ENCODE measurements at regions of chr5 and their contacts with region 1.

Region 1: GRCh38 chr5:134113902-134114875 is at the start of gene TCF7:
- DNase-seq: peak; percentile 69 to 87 (median 83)
- ATAC-seq: peak; percentile 89
- H3K4me3 ChIP-seq: peak within 1 kb of the TSS; percentile 93
- H3K4me3 Mint-ChIP-seq: peak within 1 kb of the TSS; percentile 93 to 100 (median 98)
- H3K27ac ChIP-seq: peak within 1 kb of the TSS; percentile 97
- H3K27ac Mint-ChIP-seq: peak within 1 kb of the TSS; percentile 88 to 99 (median 98)
- H3K4me1 ChIP-seq: peaks cover 34 to 63% of the 10 kb centered on the region in 2 donors
- H3K4me1 Mint-ChIP-seq: peaks cover 27 to 67% (median 31%) of the 10 kb centered on the region in 7 donors
- H3K27me3 ChIP-seq: no peaks in the 10 kb centered on the region
- H3K27me3 Mint-ChIP-seq: peaks cover 0 to 43% (median 0%) of the 10 kb centered on the region in 5 donors
- total RNA-seq, gene TCF7: 203 to 1,066 (median 643) TPM

Region 2: GRCh38 chr5:133321833-133322420 is 792.3 kb before region 1 on chr5:
- CTCF ChIA-PET with region 1: no interaction called
- POLR2A ChIA-PET with region 1: no interaction called
- intact Hi-C with region 1: no loop called
- DNase-seq: peak in 2 of 9 donors; percentile 44 to 50
- ATAC-seq: peak; percentile 60
- H3K4me3 ChIP-seq: no peak overlapping the region
- H3K4me3 Mint-ChIP-seq: no peak overlapping the region
- H3K27ac ChIP-seq: no peak overlapping the region
- H3K27ac Mint-ChIP-seq: peak overlapping the region in 2 of 9 donors; percentile 25 to 29
- H3K4me1 ChIP-seq: no peaks in the 10 kb centered on the region
- H3K4me1 Mint-ChIP-seq: peaks cover 0 to 10% (median 2%) of the 10 kb centered on the region in 7 donors
- H3K27me3 ChIP-seq: no peaks in the 10 kb centered on the region
- H3K27me3 Mint-ChIP-seq: no peaks in the 10 kb centered on the region

Region 3: GRCh38 chr5:133589281-133589680 is 524.9 kb before region 1 on chr5:
- CTCF ChIA-PET with region 1: no interaction called
- POLR2A ChIA-PET with region 1: no interaction called
- intact Hi-C with region 1: no loop called
- DNase-seq: no peak
- ATAC-seq: no peak
- H3K4me3 ChIP-seq: no peak overlapping the region
- H3K4me3 Mint-ChIP-seq: no peak overlapping the region
- H3K27ac ChIP-seq: no peak overlapping the region
- H3K27ac Mint-ChIP-seq: no peak overlapping the region
- H3K4me1 ChIP-seq: no peaks in the 10 kb centered on the region
- H3K4me1 Mint-ChIP-seq: no peaks in the 10 kb centered on the region
- H3K27me3 ChIP-seq: no peaks in the 10 kb centered on the region
- H3K27me3 Mint-ChIP-seq: peaks cover 0 to 24% (median 0%) of the 10 kb centered on the region in 5 donors

Region 4: GRCh38 chr5:133881576-133882388 is 232.4 kb before region 1 on chr5:
- CTCF ChIA-PET with region 1: no interaction called
- POLR2A ChIA-PET with region 1: no interaction called
- intact Hi-C with region 1: no loop called
- DNase-seq: no peak
- ATAC-seq: no peak
- H3K4me3 ChIP-seq: no peak overlapping the region
- H3K4me3 Mint-ChIP-seq: no peak overlapping the region
- H3K27ac ChIP-seq: no peak overlapping the region
- H3K27ac Mint-ChIP-seq: peak overlapping the region in 1 of 9 donors; percentile 33
- H3K4me1 ChIP-seq: no peaks in the 10 kb centered on the region
- H3K4me1 Mint-ChIP-seq: no peaks in the 10 kb centered on the region
- H3K27me3 ChIP-seq: no peaks in the 10 kb centered on the region
- H3K27me3 Mint-ChIP-seq: peaks cover 0 to 13% (median 5%) of the 10 kb centered on the region in 5 donors

Region 5: GRCh38 chr5:134004592-134005375 is 109.4 kb before region 1 on chr5 and contains the start of gene VDAC1:
- CTCF ChIA-PET with region 1: no interaction called
- POLR2A ChIA-PET with region 1: no interaction called
- intact Hi-C with region 1: loop called in 1 of 2 experiments (anchors 1 kb)
- DNase-seq: peak; percentile 74 to 92 (median 89)
- ATAC-seq: peak; percentile 85
- H3K4me3 ChIP-seq: peak within 1 kb of the TSS; percentile 83
- H3K4me3 Mint-ChIP-seq: peak within 1 kb of the TSS; percentile 89 to 97 (median 92)
- H3K27ac ChIP-seq: peak within 1 kb of the TSS; percentile 98
- H3K27ac Mint-ChIP-seq: peak within 1 kb of the TSS; percentile 86 to 97 (median 96)
- H3K4me1 ChIP-seq: peaks cover 17 to 26% of the 10 kb centered on the region in 2 donors
- H3K4me1 Mint-ChIP-seq: peaks cover 25 to 47% (median 43%) of the 10 kb centered on the region in 7 donors
- H3K27me3 ChIP-seq: no peaks in the 10 kb centered on the region
- H3K27me3 Mint-ChIP-seq: no peaks in the 10 kb centered on the region
- total RNA-seq, gene VDAC1: 37.8 to 259 (median 43.7) TPM

Region 6: GRCh38 chr5:134070725-134071613 is 43.2 kb before region 1 on chr5:
- CTCF ChIA-PET with region 1: interaction called, 9 read pairs
- POLR2A ChIA-PET with region 1: interaction called, 191 read pairs
- intact Hi-C with region 1: loop called in 1 of 2 experiments (anchors 1 kb)
- DNase-seq: peak in 5 of 9 donors; percentile 27 to 61 (median 41)
- ATAC-seq: peak; percentile 50
- H3K4me3 ChIP-seq: peak overlapping the region; percentile 62
- H3K4me3 Mint-ChIP-seq: peak overlapping the region; percentile 74 to 95 (median 87)
- H3K27ac ChIP-seq: peak overlapping the region; percentile 72
- H3K27ac Mint-ChIP-seq: peak overlapping the region; percentile 79 to 99 (median 95)
- H3K4me1 ChIP-seq: peaks cover 18 to 75% of the 10 kb centered on the region in 2 donors
- H3K4me1 Mint-ChIP-seq: peaks cover 44 to 95% (median 78%) of the 10 kb centered on the region in 7 donors
- H3K27me3 ChIP-seq: no peaks in the 10 kb centered on the region
- H3K27me3 Mint-ChIP-seq: peaks cover 0 to 23% (median 0%) of the 10 kb centered on the region in 5 donors

Region 7: DNA sequence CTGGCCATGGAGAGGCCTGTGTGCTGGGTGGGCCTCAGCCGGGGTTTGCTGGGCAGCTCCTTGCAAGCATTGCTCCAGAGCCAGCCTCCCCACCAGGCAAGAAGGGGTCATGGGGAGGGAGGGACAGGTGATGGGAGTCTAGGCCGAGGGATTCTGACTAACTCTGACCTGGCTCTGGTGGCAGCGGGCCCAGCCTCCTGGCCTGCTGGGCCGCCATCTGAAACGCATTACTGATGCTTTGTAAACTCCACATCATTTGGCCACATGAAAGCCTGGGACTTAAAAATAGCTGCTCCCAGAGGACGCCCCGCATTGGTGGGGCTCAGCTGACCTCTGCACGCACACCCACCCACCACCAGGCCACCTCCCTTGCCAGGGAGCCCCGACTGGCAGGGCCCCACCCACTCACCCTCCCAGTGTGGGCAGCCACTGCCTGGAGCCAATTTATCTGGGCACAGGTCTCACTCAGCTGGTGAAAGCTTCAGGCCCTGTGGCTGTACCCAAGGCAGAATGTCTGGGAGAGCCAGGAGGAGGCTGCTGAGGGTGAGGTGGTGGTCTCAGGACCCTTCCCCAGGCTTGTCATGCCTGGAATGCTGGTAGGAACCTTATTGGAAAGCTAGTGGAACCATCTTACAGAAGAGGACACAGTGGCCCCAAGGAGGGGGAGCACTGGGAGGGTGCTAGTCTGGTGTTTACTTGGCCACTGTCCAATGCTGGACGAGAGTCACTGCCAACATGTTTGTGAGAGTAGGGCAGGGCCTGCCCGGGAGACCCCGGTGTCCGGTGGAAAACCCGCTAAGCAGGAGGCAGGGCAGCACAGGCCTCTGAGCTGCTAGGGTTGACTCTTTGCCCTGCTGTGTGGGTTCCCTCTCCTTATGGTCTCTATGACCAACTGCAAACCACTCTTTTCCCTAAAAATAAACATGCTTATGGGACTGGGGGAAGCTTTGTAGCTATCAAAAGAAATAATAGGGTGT is 11.1 kb after region 1 on chr5:
- CTCF ChIA-PET with region 1: interaction called, 394 read pairs
- POLR2A ChIA-PET with region 1: no interaction called
- intact Hi-C with region 1: loop called in 1 of 2 experiments (anchors 1 kb)
- DNase-seq: no peak
- ATAC-seq: no peak
- H3K4me3 ChIP-seq: peak overlapping the region; percentile 86
- H3K4me3 Mint-ChIP-seq: peak overlapping the region; percentile 93 to 100 (median 98)
- H3K27ac ChIP-seq: peak overlapping the region; percentile 97
- H3K27ac Mint-ChIP-seq: peak overlapping the region; percentile 80 to 99 (median 98)
- H3K4me1 ChIP-seq: peaks cover 61 to 100% of the 10 kb centered on the region in 2 donors
- H3K4me1 Mint-ChIP-seq: peaks cover 31 to 91% (median 69%) of the 10 kb centered on the region in 7 donors
- H3K27me3 ChIP-seq: no peaks in the 10 kb centered on the region
- H3K27me3 Mint-ChIP-seq: peaks cover 0 to 3% (median 0%) of the 10 kb centered on the region in 5 donors

Region 8: DNA sequence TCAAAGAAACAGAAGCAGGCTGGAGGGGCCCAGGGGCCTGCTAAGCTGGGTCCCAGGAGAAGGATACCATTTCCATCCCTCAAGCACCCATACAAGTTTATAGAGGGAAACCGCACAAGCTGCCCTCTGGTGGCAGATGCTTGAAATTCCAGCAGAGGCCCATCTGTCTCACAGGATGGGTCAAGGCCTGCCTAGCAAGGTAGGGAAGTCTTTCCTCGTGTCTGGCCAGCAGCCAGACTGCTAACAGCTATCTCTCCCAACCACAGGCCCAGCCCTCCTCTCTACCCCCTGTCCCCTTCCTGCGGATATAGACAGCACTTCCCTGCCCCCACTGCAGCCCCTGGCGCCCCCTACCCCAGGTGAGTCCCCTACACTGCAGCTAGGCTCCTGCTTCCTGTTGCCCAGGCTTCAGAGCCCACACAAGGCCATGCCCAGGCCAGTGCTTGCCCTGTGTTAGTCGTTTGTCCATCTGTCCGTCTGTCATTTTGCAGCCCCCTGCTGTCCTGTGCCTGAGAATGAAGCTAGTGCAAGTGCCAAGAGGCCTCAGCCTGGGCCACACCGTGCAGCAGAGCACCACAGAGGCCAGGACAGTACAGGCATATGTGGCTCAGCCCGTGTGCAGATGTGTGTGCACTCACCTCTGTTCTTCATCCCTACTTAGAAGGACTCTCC is 26.5 kb after region 1 on chr5:
- CTCF ChIA-PET with region 1: interaction called, 394 read pairs
- POLR2A ChIA-PET with region 1: no interaction called
- intact Hi-C with region 1: loop called (anchors 1 kb)
- DNase-seq: peak in 5 of 9 donors; percentile 30 to 63 (median 50)
- ATAC-seq: peak; percentile 67
- H3K4me3 ChIP-seq: no peak overlapping the region
- H3K4me3 Mint-ChIP-seq: peak overlapping the region in 5 of 10 donors; percentile 21 to 58 (median 41)
- H3K27ac ChIP-seq: peak overlapping the region; percentile 97
- H3K27ac Mint-ChIP-seq: peak overlapping the region; percentile 60 to 99 (median 90)
- H3K4me1 ChIP-seq: peaks cover 38 to 61% of the 10 kb centered on the region in 2 donors
- H3K4me1 Mint-ChIP-seq: peaks cover 36 to 81% (median 60%) of the 10 kb centered on the region in 7 donors
- H3K27me3 ChIP-seq: no peaks in the 10 kb centered on the region
- H3K27me3 Mint-ChIP-seq: peaks cover 0 to under 1% (median 0%) of the 10 kb centered on the region in 5 donors

Region 9: DNA sequence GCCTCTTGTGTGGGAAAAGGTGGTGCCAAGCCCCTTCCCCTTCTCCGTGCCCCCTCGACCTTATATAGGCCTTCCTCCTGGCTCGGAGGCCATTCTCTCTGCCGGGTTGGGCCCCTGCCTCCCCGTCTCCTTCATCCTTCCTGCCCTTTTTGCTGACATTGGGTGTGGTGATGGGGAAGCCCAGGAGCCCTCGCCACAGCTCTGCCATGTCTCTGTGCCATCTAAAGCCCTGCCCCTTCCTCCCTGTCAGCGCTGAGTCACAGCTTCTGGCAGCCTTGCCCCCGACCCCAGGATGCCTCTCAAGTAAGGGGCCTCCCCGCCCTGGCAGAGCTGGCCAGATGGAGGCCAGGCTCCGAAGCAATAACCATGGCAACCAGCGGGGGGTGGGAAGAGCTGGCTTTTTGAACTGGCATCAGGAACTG is 441.7 kb after region 1 on chr5:
- CTCF ChIA-PET with region 1: no interaction called
- POLR2A ChIA-PET with region 1: no interaction called
- intact Hi-C with region 1: no loop called
- DNase-seq: peak; percentile 43 to 88 (median 59)
- ATAC-seq: peak; percentile 94
- H3K4me3 ChIP-seq: no peak overlapping the region
- H3K4me3 Mint-ChIP-seq: peak overlapping the region; percentile 25 to 73 (median 56)
- H3K27ac ChIP-seq: peak overlapping the region; percentile 73
- H3K27ac Mint-ChIP-seq: peak overlapping the region; percentile 76 to 95 (median 89)
- H3K4me1 ChIP-seq: peaks cover 21 to 32% of the 10 kb centered on the region in 2 donors
- H3K4me1 Mint-ChIP-seq: peaks cover 25 to 57% (median 38%) of the 10 kb centered on the region in 7 donors
- H3K27me3 ChIP-seq: no peaks in the 10 kb centered on the region
- H3K27me3 Mint-ChIP-seq: no peaks in the 10 kb centered on the region